ENCODE measurements at regions of chr7 and their contacts with region 1.

Region 1: GRCh38 chr7:27196287-27196767 is 3.6 kb downstream of the HOXA13 start:
- DNase-seq: peak; percentile 75
- H3K4me3 ChIP-seq: no peak overlapping the region
- H3K27ac ChIP-seq: no peak overlapping the region
- H3K4me1 ChIP-seq: no peaks in the 10 kb centered on the region
- H3K27me3 ChIP-seq: peaks cover 15% of the 10 kb centered on the region; the same call in 1 of the 2 replicates

Region 2: GRCh38 chr7:26667500-26668133 is 528.7 kb before region 1 on chr7:
- in situ Hi-C with region 1: no loop called
- DNase-seq: peak; percentile 94
- H3K4me3 ChIP-seq: no peak overlapping the region
- H3K27ac ChIP-seq: no peak overlapping the region
- H3K4me1 ChIP-seq: 0 out of 2 replicates have a peak, but pooled peaks cover 8% of the 10 kb centered on the region
- H3K27me3 ChIP-seq: no peaks in the 10 kb centered on the region

Region 3: DNA sequence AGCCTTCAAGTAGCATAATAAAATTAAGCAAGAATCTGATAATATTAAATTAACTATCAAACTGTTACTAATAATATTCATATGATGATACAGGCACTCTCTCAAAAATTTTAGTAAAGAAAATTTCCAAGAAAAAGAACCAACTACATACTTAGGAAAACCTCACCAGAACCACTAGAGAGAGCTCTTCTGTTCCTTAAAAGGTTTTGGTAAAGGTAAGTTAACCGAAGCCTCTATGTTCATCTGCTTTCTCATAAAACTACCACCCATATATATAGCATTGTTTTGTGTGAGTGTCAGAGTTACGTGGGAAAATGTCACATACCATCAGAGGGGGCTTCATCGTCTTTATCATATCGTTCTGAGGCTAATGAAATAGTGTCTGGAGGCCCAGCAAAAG is 352.6 kb before region 1 on chr7:
- in situ Hi-C with region 1: no loop called
- DNase-seq: peak; percentile 40
- H3K4me3 ChIP-seq: no peak overlapping the region
- H3K27ac ChIP-seq: no peak overlapping the region
- H3K4me1 ChIP-seq: no peaks in the 10 kb centered on the region
- H3K27me3 ChIP-seq: no peaks in the 10 kb centered on the region

Region 4: DNA sequence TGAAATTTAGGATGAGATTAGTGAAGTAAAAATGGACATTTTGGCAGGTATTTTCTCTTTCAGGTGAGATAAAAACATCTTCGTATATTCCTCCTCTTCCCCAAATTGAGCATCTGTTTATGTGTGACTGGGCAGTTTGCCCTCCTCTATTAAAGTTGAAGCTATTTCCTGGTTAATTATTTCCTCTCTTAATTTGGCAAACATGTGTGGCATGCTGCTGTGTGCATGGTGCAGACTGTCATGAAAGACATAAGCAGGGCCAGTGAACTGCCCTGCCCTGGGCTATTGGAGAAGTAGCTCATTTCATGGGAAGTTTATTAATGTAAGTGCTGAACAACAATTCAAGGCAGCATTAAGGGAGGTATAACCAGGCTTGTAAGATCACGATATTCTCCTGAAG is 98.9 kb after region 1 on chr7:
- in situ Hi-C with region 1: no loop called
- DNase-seq: no peak
- H3K4me3 ChIP-seq: no peak overlapping the region
- H3K27ac ChIP-seq: no peak overlapping the region
- H3K4me1 ChIP-seq: no peaks in the 10 kb centered on the region
- H3K27me3 ChIP-seq: no peaks in the 10 kb centered on the region

Region 5: DNA sequence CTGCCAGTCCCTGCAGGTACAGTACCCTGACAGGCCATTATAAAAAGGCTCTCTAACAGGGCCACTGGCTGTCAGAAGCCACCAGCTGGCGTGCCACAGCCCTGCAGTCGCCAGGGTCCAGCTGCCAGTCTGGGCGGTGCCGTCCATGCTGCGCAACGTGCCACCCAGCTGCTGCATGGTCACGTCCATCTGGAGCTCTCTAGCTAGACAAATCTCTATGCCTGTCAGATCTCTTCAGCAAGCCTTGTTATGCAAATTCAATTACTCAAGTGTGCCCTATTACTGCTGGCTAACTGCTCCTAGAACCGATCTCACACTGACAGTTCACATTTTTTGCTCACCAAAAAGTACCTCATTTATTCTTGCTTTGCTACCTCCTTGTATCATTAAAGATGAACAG is 390.5 kb after region 1 on chr7:
- in situ Hi-C with region 1: loop called (anchors 10 kb)
- DNase-seq: no peak
- H3K4me3 ChIP-seq: no peak overlapping the region
- H3K27ac ChIP-seq: no peak overlapping the region
- H3K4me1 ChIP-seq: peaks cover 5% of the 10 kb centered on the region; the same call in 1 of the 2 replicates
- H3K27me3 ChIP-seq: no peaks in the 10 kb centered on the region

Region 6: DNA sequence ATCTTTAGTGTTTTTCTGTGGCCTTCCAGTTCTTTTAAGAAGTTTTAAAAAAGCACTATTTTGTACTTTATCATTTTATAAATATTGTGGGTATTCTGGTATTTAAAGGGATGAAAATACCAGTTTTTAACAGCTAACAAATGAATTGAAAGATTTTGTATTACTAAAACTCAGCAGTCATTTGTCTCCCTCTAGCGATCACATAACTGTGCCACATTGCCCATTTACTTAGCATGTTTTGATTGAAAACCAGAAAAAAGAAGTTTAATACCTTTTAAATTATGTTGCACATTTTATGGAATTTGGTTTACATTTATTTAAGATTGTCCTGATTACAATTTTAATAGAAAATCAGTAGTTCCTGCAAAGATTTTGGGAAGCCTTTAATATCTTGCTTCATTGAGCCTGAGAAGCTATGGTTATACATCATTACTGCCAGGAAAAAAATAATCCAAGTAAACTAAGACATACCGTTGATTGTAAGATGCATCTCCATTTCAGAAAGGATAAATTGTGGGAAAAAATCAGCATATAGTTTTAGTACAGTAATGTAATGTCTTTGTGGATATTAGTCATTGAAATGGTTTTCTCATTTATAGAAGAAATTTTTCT is 578.5 kb after region 1 on chr7:
- in situ Hi-C with region 1: loop called (anchors 10 kb)
- DNase-seq: peak; percentile 70
- H3K4me3 ChIP-seq: no peak overlapping the region
- H3K27ac ChIP-seq: no peak overlapping the region
- H3K4me1 ChIP-seq: no peaks in the 10 kb centered on the region
- H3K27me3 ChIP-seq: no peaks in the 10 kb centered on the region

Region 7: GRCh38 chr7:27921081-27921836 is 724.9 kb after region 1 on chr7:
- in situ Hi-C with region 1: loop called (anchors 10 kb)
- DNase-seq: peak; percentile 82
- H3K4me3 ChIP-seq: peak overlapping the region; percentile 24
- H3K27ac ChIP-seq: no peak overlapping the region
- H3K4me1 ChIP-seq: peaks cover 27% of the 10 kb centered on the region
- H3K27me3 ChIP-seq: no peaks in the 10 kb centered on the region

Region 8: GRCh38 chr7:28096713-28097112 is 900.4 kb after region 1 on chr7:
- in situ Hi-C with region 1: loop called (anchors 10 kb)
- DNase-seq: peak; percentile 84
- H3K4me3 ChIP-seq: no peak overlapping the region
- H3K27ac ChIP-seq: no peak overlapping the region
- H3K4me1 ChIP-seq: 0 out of 2 replicates have a peak, but pooled peaks cover 3% of the 10 kb centered on the region
- H3K27me3 ChIP-seq: no peaks in the 10 kb centered on the region

Measured in GM23248 (cell line).